Activated CD8-positive, alpha-beta T cell treated with anti-CD3 and anti-CD28 coated beads for 36 hours (primary cell): ENCODE measurements at regions of chr12 and their contacts with region 1.

Region 1: DNA sequence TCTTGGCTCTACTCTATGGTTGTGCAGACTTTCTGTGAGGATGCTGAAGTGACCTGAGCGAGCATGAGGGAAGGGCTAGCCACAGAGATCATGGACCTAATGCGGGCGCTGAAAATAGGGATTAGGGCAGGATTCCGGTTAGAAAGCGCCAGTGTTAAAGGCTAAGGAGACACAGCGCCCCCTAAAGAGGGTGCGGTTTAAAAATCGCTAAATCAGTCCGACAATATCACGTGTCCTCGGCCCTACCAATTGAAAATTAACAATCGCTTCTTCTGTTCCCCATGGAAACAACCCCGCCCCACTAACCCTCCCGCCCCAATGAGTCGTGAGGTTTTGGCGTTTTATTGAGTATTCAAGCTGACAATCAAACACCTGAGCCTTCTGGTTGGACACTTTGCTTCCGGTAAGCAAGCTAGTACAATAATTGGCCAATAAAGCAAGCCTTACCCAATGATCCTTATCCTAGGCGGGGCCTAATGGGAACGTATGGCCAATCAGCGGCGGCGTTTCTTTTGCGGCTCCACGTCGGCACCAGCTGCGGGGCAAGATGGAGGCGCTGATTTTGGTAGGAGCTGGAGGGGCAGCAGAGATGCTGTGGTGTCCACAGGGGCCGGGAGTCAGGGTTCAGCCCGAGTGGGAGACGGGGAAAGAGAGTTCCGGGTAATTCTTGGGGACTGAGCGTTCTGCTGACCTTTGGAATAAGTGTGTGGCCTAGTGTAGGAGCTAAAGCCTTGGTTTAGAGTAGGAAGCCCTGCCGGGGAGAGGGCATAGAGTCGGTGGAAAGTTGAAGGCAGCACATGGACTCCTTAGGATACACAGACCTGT is at the start of gene COPZ1:
- DNase-seq: peak; percentile 98
- ATAC-seq: peak; percentile 99
- H3K4me3 Mint-ChIP-seq: peak within 1 kb of the TSS; percentile 98
- H3K27ac Mint-ChIP-seq: peak within 1 kb of the TSS; percentile 94
- H3K4me1 Mint-ChIP-seq: peaks cover 28% of the 10 kb centered on the region
- H3K27me3 Mint-ChIP-seq: no peaks in the 10 kb centered on the region
- CTCF ChIP-seq: peak; percentile 65
- total RNA-seq, gene COPZ1: 75.8 to 78.4 TPM

Region 2: DNA sequence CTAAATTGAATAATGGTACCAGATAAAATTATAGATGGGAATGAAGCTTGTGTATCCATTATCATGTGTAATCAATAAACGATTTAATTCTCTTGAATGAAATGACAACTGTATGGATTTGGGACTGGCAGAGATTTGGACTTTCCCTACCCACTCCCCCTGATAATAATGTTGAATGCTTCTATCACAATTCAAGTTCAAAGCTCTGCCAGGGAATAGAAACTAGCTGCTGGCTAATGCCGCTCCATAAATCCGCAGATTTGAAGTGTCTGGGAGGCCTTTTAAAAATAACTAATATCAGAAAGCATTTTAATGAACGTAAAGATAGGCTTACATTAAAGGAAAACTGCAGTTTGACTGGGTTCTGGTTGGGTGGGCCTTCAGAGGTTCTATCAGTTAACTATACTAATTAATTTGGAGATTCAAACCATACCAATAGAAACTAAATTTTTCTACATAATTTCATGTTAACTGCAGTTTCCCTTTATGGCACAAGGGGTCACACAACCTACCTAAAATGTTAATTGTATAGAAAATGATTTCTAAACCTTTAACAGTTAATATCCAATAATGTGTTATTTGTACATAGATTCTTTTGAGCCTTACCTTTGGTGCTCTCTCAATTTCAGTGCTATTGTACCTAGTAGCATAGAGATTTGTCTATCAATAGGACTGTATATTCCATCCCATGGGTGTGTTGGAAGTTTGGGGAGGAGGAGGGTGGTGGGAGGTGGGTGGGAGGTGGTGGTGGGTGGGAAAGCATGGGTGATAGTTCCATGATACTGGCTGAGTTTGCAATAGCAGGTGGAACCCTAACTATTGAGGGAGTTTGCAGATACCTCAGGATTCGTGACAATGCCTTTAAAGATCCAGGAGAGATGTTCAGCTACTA is 39.4 kb before region 1 on chr12:
- CTCF ChIA-PET with region 1: interaction called, 93 read pairs
- POLR2A ChIA-PET with region 1: interaction called, 10 read pairs
- intact Hi-C with region 1: loop called (anchors 2 kb)
- DNase-seq: no peak
- ATAC-seq: no peak
- H3K4me3 Mint-ChIP-seq: no peak overlapping the region
- H3K27ac Mint-ChIP-seq: peak overlapping the region; percentile 73
- H3K4me1 Mint-ChIP-seq: peaks cover 38% of the 10 kb centered on the region
- H3K27me3 Mint-ChIP-seq: no peaks in the 10 kb centered on the region
- CTCF ChIP-seq: peak; percentile 57

Region 3: DNA sequence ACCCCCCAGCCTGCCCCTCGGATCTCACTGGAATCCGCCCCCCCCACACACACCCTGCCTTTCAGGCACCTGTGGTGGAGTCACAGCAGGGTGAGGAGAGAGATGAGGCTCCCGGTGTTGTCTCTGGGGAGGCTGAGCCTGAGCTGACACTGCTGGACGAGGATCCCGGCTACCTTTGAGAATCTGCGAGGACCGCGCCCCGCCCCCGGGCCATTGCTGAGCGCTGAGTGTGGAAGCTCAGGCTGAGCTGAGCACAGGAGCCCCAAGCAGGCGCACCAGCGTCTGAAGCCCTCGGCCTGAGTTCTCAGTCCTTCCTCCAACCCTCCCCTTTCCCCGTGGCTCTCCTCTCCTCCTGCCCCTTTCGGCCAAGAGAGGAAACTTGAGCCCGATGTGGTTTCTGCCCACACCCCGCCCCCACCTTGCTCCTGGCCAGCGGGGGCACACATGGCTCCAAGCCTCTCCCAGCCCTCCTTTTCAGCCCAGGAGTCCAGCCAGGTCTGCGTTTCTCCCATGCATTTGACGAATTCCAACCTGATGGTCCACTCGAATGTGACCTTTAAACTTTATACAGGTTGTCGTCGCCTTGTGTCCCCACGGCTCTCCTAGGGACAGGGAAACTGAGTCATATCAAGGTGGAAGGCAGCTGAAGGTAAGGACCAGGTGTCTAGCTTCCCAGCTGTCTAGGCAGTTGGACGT is 23.9 kb before region 1 on chr12 and contains the start of gene NFE2:
- CTCF ChIA-PET with region 1: interaction called, 93 read pairs
- POLR2A ChIA-PET with region 1: interaction called, 3 read pairs
- intact Hi-C with region 1: no loop called
- DNase-seq: peak; percentile 55
- ATAC-seq: peak; percentile 69
- H3K4me3 Mint-ChIP-seq: no peak within 1 kb of the TSS
- H3K27ac Mint-ChIP-seq: no peak within 1 kb of the TSS
- H3K4me1 Mint-ChIP-seq: peaks cover 10% of the 10 kb centered on the region
- H3K27me3 Mint-ChIP-seq: peaks cover 45% of the 10 kb centered on the region
- CTCF ChIP-seq: no peak
- total RNA-seq, gene NFE2: not detected

Region 4: DNA sequence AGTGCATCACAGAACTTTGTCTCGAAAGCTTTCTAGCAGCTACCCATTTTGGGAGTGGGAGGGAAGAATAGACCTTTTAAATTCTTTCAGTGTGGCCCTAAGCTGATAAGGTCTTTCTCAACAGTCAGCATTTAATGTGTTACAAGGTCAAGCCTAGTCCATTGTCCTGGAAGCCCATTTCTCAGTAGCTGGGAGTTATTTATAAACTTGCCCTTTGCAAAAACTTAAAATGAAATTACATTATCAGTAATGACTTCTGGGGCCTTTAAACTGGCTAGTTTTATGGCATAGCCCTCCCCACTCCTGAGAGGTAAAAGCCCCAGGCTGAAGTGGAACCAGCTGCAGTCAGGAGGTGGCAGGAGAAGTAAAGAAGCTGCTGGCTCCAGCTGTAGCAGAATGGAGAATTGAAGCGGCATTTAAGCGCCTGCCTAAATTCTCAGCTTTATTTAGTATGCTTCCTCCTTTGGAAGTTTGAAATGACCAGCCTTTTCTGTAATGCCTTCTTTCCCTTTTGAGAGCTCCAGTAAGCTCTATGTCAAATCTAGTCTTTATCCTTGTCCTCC is 12.5 kb after region 1 on chr12:
- CTCF ChIA-PET with region 1: interaction called, 83 read pairs
- POLR2A ChIA-PET with region 1: interaction called, 7 read pairs
- intact Hi-C with region 1: no loop called
- DNase-seq: no peak
- ATAC-seq: no peak
- H3K4me3 Mint-ChIP-seq: no peak overlapping the region
- H3K27ac Mint-ChIP-seq: no peak overlapping the region
- H3K4me1 Mint-ChIP-seq: peaks cover 15% of the 10 kb centered on the region
- H3K27me3 Mint-ChIP-seq: no peaks in the 10 kb centered on the region
- CTCF ChIP-seq: no peak

Region 5: DNA sequence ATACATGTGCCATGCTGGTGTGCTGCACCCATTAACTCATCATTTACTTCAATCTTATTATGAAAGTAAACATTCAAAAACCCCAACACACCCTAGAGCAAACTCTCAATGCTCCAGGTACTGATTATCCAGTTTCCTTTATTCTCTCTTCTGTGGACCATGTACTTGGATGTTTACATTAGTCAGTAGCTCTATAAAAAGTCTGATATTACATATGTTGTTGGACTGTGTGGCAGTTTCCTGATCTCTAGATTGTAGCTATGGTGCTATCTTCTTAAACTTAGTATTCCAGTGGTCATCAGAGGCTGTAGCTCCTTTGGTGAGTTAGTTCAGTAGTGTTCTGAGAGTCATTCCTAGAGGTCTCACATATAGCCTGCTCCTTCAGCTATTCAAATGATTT is 119.4 kb after region 1 on chr12:
- CTCF ChIA-PET with region 1: no interaction called
- POLR2A ChIA-PET with region 1: no interaction called
- intact Hi-C with region 1: no loop called
- DNase-seq: no peak
- ATAC-seq: no peak
- H3K4me3 Mint-ChIP-seq: no peak overlapping the region
- H3K27ac Mint-ChIP-seq: no peak overlapping the region
- H3K4me1 Mint-ChIP-seq: peaks cover 3% of the 10 kb centered on the region
- H3K27me3 Mint-ChIP-seq: no peaks in the 10 kb centered on the region
- CTCF ChIP-seq: no peak

Region 6: GRCh38 chr12:54463034-54463433 is 138.2 kb after region 1 on chr12:
- CTCF ChIA-PET with region 1: no interaction called
- POLR2A ChIA-PET with region 1: no interaction called
- intact Hi-C with region 1: no loop called
- DNase-seq: no peak
- ATAC-seq: no peak
- H3K4me3 Mint-ChIP-seq: no peak overlapping the region
- H3K27ac Mint-ChIP-seq: no peak overlapping the region
- H3K4me1 Mint-ChIP-seq: peaks cover 2% of the 10 kb centered on the region
- H3K27me3 Mint-ChIP-seq: peaks cover 13% of the 10 kb centered on the region
- CTCF ChIP-seq: no peak

Region 7: DNA sequence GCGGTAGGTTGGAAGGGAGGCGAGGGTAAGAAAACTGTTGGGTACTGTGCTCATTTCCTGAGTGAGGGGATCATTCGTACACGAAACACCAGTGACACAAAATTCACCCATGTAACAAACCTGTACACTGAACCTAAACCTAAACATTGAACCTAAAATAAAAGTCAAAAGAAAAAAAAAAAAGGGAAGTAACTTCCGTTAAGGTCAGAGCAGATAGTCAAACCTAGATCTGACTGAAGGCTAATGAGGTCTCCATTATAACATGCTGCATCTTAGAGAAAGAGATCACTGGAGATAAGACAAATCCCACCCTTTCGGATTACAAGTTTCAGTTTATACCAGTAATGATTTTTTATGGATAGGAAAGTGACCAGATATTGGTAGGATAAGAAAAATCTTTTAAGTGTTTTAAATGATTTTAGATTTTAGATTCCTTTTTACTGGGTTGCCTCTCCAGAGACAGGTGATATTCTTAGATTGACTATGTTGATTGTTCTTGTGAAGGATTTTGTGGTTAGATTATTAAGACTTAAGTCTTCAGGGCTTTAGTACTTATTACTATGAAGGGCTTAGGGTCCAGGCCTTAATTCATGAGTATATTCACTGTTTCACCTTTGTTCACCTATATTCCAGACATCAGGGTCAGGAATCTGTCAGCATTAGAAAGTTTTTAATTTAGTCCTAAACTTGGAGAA is 161.5 kb after region 1 on chr12:
- CTCF ChIA-PET with region 1: no interaction called
- POLR2A ChIA-PET with region 1: no interaction called
- intact Hi-C with region 1: no loop called
- DNase-seq: no peak
- ATAC-seq: no peak
- H3K4me3 Mint-ChIP-seq: no peak overlapping the region
- H3K27ac Mint-ChIP-seq: no peak overlapping the region
- H3K4me1 Mint-ChIP-seq: no peaks in the 10 kb centered on the region
- H3K27me3 Mint-ChIP-seq: no peaks in the 10 kb centered on the region
- CTCF ChIP-seq: no peak